Posterior vena cava (tissue), 2 donors: ENCODE measurements at regions of chr17 and their contacts with region 1.

Region 1: DNA sequence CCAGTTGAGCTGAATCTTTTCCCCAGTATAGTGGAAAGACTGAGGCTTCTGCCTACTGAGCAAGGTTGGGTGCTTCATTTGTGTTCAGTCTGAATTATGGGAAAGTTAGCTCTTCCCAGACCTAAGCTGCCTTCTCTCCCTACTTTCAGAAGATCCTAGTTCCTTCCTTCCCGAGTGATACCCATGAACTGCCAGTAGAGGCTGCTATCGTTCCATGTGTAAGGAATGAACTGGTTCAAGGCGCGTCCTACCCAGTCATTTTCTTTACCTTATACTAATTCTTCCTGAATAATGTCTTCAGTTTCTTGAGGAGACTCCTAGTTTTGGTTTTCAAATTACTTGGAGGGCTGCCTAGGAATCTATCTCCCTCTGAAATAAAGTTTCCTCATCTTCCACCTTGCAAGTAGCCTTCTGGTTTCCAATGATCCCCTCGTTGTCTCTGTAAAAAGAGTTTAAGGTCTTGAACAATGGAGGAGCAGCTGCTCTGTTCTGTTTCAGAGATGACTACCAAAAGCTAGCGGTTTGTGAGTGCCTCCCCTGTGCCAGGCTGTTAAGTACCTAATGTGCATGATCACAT is 934 bp upstream of the AOC2 start:
- DNase-seq: no peak

Region 2: DNA sequence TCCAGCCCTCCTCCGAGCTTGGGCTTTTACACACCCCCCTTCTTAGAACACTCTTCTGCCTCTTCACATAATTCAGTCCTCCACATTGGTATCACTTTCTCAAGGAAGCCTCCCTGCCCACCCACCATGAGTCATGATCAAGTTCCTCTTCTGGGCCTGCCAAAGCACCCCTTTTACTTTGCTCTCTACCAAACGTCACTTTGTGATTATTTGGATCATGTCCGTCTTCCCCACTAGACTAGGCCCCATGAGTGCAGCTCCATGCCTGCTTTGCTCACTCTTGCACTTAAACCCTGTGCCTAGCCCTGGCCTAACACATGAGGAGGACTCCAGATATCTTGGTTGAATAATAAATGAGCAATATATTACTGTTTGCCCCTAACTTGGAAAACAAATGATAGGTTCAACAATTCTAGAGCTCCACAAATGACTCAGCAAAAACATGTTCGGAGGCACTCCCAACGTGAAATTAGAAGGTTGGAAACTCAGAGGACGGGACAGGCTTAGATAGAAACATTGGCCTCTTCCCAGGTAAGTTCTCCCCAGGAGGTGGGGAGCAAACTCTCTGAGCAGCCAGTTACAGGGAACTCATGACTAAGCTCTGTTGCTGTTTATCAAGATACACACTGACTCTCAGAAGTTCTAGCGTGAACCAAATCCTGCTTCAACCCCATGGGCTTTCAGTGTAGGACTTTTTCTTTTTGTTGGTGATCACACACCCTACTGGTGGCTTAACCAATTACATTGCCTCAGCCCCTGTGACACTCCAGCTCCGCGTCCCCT is 85.5 kb after region 1 on chr17:
- intact Hi-C with region 1: loop called in 1 of 2 experiments (anchors 2 kb)
- DNase-seq: peak; percentile 72

Region 3: DNA sequence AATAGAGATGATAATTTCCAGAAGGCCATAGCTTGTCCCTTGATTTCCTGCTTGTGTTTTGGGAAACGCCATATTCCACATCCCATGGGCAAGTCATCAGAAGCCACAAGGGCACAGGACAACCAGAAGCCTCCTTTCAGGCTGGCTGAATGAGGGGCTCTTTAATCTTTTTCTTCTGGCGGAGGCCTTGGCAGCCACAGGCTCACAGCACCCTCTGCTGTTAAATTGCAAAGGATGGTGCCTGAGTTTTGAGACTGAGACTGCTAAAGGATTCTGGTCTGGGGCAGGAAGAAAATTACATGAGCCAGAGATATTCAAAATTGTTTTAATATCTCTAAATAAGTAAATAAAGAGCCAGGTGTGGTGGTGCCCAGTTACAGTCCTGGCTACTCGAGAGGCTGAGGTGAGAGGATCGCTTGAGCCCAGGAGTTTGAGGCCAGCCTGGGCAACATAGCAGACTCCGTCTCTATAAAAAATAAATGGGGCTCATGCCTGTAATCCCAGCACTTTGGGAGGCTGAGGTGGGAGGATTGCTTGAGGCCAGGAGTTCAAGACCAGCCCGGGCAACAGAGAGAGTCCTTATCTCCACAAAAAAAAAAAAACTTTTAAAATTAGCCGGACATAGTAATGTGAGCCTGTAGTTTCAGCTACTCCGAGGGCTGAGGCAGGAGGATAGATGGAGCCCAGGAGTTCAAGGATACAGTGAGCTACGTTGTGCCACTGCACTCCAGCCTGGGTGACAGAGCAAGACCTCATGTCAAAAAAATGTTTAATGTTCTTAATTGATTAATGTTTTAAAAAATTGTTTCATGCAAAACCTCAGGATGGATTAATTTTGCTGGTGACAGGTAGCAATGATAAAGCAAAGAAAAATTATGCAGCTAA is 94.5 kb after region 1 on chr17:
- intact Hi-C with region 1: loop called in 1 of 2 experiments (anchors 5 kb)
- DNase-seq: no peak

Region 4: DNA sequence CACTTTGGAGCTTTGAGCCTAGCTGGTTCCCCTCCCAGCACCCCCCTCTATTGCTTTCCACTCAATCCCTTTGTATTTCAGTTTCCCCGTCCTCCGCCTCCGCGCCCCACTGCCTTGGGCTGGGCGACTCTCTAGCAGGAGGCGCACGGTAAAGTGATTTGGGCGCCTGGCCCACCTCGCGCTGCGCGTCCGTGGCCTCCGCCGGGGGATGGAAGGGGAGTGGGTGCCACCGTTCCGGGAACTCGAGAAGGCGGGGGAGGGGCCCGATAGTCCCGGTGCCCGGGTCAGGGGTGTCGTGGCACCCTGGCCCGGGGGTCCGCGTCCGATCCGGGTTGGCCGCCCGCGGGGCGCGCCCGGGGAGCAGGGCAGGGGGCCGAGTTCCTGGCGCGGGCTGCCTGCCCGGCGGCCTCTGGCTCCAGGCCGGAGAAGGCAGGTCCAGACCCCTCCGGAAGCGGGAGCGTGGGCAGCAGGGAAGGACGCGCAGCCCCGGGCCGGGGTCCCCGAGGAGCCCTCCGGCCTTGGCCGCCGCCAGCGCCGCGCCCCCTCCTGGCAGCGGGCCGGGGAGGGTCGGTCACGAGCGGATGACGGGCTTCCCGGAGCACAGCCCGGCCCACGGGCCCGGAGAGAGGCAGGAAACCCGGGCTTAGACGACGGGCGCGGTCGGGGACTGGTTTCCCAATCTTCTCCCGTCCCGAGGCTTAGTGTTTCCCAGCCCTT is 802.5 kb after region 1 on chr17:
- intact Hi-C with region 1: no loop called
- DNase-seq: peak; percentile 97